Activated T-helper 1 cell treated with anti-CD3 and anti-CD28 coated beads, Interleukin-12 subunit alpha, Interleukin-12 subunit beta, Interleukin-2, Interleukin-4 antibody, amounts not matched to agents 30 ng/mL and 10 ng/mL and 1 ng/mL, durations not matched to agents 14 hours and 24 hours and 36 hours (primary cell): ENCODE measurements at regions of chr22 and their contacts with region 1.

Region 1: GRCh38 chr22:41966607-41967240 is 2.5 kb upstream of the SEPTIN3 start:
- DNase-seq: peak; percentile 37
- H3K4me3 Mint-ChIP-seq: no peak overlapping the region
- H3K27ac Mint-ChIP-seq: no peak overlapping the region
- H3K4me1 Mint-ChIP-seq: peaks cover 8% of the 10 kb centered on the region
- H3K27me3 Mint-ChIP-seq: no peaks in the 10 kb centered on the region

Region 2: DNA sequence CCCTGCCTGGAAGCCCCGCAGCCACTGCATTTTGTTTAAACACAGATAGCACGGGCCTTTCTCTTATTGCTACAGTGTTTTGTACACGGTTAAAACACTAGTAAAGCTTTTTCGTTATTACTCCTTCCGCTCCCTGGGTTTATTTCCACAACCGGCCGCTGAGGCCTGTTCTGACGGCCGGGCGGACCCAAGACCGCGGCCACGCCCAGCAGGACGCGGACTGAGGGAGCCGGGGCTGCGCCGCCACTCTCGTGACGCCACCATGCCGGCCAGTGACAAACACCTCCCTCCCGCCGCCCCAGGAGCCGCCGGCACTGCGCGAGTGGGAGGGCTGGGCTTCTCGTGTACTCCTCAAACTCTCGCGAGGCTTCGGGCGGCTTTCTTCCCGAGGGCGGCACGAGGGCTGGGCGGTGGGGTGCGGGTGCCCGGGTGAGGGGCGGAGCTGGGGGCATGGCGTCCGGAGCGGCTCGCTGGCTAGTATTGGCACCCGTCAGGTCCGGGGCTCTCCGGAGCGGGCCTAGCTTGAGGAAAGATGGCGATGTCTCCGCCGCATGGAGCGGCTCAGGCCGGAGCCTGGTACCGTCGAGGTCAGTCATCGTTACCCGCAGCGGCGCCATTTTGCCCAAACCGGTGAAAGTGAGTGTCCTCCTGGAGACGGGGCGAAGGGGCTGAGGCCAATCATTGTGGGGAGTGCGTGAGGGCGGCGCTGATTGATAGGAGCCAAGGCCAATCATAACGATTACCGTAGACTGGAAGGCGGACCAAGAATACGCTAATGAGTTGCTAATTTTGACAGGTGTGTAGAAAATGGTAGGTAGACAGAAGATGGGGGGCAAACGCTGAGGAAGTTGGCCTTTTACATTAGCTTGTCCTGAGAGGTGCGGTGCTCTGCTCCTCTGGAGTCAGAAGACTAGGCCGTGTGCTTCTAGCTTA is 112.9 kb after region 1 on chr22 and contains the start of gene SMDT1:
- intact Hi-C with region 1: loop called (anchors 1 kb)
- DNase-seq: peak; percentile 98
- H3K4me3 Mint-ChIP-seq: peak within 1 kb of the TSS; percentile 89
- H3K27ac Mint-ChIP-seq: peak within 1 kb of the TSS; percentile 92
- H3K4me1 Mint-ChIP-seq: peaks cover 34% of the 10 kb centered on the region
- H3K27me3 Mint-ChIP-seq: no peaks in the 10 kb centered on the region
- total RNA-seq, gene SMDT1: 53.9 and 58.2 TPM in 2 replicates

Region 3: DNA sequence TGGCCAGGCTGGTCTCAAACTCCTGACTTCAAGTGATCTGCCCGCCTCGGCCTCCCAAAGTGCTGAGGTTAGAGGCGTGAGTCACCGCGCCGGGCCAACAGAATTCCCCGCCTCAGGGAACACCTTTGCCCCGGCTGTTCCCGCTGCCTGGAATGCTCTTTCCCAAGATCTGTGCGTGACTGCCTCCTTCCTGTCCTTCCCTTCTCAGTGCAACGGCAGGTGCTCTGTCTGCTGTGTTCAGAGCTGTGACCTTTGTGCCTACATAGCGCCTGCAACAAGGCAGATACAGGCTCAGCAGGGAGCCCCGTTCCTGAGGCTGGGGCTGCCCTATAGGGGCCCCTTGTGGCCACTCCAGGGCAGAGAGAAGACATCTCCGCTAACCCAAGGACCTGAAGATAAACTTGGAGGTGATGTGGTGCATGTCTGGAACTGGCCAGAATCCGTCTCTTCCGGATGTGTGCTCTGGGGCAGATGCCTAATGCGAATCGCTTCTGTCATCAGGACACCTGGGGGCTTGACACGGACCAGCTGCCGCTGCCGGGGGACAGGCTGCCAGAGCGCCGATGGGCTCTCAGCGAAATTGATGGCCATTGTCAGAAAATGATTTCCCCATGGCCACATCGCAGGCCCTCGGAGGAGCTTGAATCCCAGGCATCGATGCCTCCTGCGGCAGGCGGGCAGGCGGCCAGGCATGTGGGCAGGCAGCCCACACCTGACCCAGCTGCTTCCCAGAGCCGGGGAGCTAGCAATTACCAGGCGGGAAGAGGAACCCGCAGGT is 347.3 kb after region 1 on chr22:
- intact Hi-C with region 1: loop called (anchors 1 kb)
- DNase-seq: peak; percentile 28
- H3K4me3 Mint-ChIP-seq: no peak overlapping the region
- H3K27ac Mint-ChIP-seq: no peak overlapping the region
- H3K4me1 Mint-ChIP-seq: peaks cover 21% of the 10 kb centered on the region
- H3K27me3 Mint-ChIP-seq: no peaks in the 10 kb centered on the region

Region 4: GRCh38 chr22:42444077-42444904 is 477.6 kb after region 1 on chr22:
- intact Hi-C with region 1: loop called (anchors 2 kb)
- DNase-seq: peak; percentile 76
- H3K4me3 Mint-ChIP-seq: peak overlapping the region; percentile 68
- H3K27ac Mint-ChIP-seq: peak overlapping the region; percentile 78
- H3K4me1 Mint-ChIP-seq: peaks cover 35% of the 10 kb centered on the region
- H3K27me3 Mint-ChIP-seq: peaks cover 5% of the 10 kb centered on the region

Region 5: GRCh38 chr22:42553475-42554361 is 587.0 kb after region 1 on chr22 and contains the start of gene SERHL2:
- intact Hi-C with region 1: loop called (anchors 2 kb)
- DNase-seq: peak; percentile 85
- H3K4me3 Mint-ChIP-seq: peak within 1 kb of the TSS; percentile 87
- H3K27ac Mint-ChIP-seq: peak within 1 kb of the TSS; percentile 52
- H3K4me1 Mint-ChIP-seq: peaks cover 6% of the 10 kb centered on the region
- H3K27me3 Mint-ChIP-seq: no peaks in the 10 kb centered on the region
- total RNA-seq, gene SERHL2: 1.4 and 2.1 TPM in 2 replicates